ENCODE measurements at regions of chr1 and their contacts with region 1.

Region 1: GRCh38 chr1:61724813-61725694 is at the start of gene TM2D1:
- DNase-seq: peak; percentile 92
- ATAC-seq: peak; percentile 98
- H3K4me3 ChIP-seq: peak within 1 kb of the TSS; percentile 93
- H3K27ac ChIP-seq: peak within 1 kb of the TSS; percentile 59
- H3K4me1 ChIP-seq: peaks cover 18% of the 10 kb centered on the region
- H3K27me3 ChIP-seq: no peaks in the 10 kb centered on the region
- CTCF ChIP-seq: no peak
- total RNA-seq, gene TM2D1: 24.6 and 48.0 TPM in 2 replicates

Region 2: GRCh38 chr1:61141288-61142042 is 583.6 kb before region 1 on chr1:
- CTCF ChIA-PET with region 1: no interaction called
- POLR2A ChIA-PET with region 1: no interaction called
- intact Hi-C with region 1: no loop called
- DNase-seq: peak; percentile 68
- ATAC-seq: peak; percentile 51
- H3K4me3 ChIP-seq: peak overlapping the region; percentile 4; the same call in 1 of the 2 replicates
- H3K27ac ChIP-seq: peak overlapping the region; percentile 82
- H3K4me1 ChIP-seq: peaks cover 58% of the 10 kb centered on the region
- H3K27me3 ChIP-seq: no peaks in the 10 kb centered on the region
- CTCF ChIP-seq: no peak

Region 3: DNA sequence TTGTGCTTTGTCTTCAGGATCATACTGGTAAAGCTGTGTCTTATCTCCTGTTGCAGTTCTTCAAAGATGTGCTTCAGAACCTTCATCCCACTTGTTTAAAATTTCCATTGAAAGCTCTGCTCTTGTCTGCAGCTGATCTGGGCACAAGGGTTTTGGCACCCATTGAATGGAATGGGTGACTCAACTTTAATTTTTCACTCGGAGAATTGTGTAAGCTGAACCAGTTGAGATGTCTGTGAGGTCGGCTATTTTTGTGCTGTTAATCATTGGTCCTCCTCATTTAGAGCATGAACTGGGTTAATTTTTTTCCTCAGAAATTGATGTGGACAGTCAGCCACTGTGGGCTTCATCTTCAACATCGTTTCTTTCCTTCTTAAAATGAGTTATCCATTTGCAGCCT is 252.2 kb before region 1 on chr1:
- CTCF ChIA-PET with region 1: no interaction called
- POLR2A ChIA-PET with region 1: no interaction called
- intact Hi-C with region 1: no loop called
- DNase-seq: peak; percentile 39
- ATAC-seq: no peak
- H3K4me3 ChIP-seq: no peak overlapping the region
- H3K27ac ChIP-seq: no peak overlapping the region
- H3K4me1 ChIP-seq: no peaks in the 10 kb centered on the region
- H3K27me3 ChIP-seq: no peaks in the 10 kb centered on the region
- CTCF ChIP-seq: no peak

Region 4: DNA sequence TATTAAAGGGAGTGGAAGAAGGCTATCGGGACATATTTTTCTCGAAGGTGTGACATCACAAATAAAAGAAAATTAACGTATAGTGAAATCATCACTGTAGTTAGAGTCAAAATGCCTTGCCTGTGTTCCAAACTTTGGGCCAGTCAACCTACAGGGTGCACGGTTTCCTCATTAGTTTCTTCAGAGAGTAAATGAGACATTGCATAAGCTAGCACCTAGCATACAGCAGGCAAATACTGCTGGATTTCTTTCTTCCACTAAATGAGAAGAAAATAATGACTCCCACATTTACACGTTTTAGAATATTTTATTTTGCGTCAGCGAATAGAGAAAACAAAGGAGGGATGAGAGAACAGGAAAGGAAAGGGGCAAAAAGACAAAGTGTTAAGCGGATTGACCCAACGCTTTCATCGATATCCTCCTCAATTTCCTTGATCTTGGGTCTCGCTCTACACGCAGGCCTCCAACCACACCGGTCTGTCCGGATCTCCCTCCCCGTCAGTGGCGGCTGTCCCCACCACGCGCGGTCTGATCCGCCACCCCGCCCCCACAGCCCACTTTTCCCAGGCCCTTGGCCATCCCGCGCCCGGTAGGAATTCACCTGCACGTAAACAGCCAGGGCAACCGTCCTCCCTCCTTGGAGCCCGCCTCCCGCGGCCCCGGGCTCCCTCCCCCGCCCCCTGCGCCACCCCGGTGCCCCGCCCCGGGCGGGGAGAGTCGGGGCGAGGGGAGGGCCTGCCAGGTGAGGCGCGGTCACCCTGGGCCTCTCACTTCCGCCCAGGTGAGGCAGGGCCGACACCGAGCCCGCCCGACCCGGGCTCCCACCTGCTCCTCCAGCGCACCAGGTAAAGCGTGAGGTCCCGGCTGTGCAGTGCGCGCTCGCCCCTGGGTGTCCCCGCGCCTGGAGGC is 16.9 kb after region 1 on chr1 and contains the start of gene PATJ:
- CTCF ChIA-PET with region 1: no interaction called
- POLR2A ChIA-PET with region 1: no interaction called
- intact Hi-C with region 1: loop called (anchors 2 kb)
- DNase-seq: peak; percentile 90
- ATAC-seq: peak; percentile 75
- H3K4me3 ChIP-seq: peak within 1 kb of the TSS; percentile 90
- H3K27ac ChIP-seq: peak within 1 kb of the TSS; percentile 58
- H3K4me1 ChIP-seq: peaks cover 31% of the 10 kb centered on the region
- H3K27me3 ChIP-seq: no peaks in the 10 kb centered on the region
- CTCF ChIP-seq: no peak
- total RNA-seq, gene PATJ: 28.7 and 35.2 TPM in 2 replicates

Region 5: GRCh38 chr1:61754545-61754944 is 29.5 kb after region 1 on chr1:
- CTCF ChIA-PET with region 1: no interaction called
- POLR2A ChIA-PET with region 1: no interaction called
- intact Hi-C with region 1: loop called (anchors 1 kb)
- DNase-seq: peak; percentile 90
- ATAC-seq: peak; percentile 95
- H3K4me3 ChIP-seq: no peak overlapping the region
- H3K27ac ChIP-seq: peak overlapping the region; percentile 64
- H3K4me1 ChIP-seq: peaks cover 10% of the 10 kb centered on the region
- H3K27me3 ChIP-seq: no peaks in the 10 kb centered on the region
- CTCF ChIP-seq: no peak

Region 6: GRCh38 chr1:61842871-61843514 is 117.9 kb after region 1 on chr1:
- CTCF ChIA-PET with region 1: interaction called, 6 read pairs
- POLR2A ChIA-PET with region 1: no interaction called
- intact Hi-C with region 1: loop called (anchors 5 kb)
- DNase-seq: peak; percentile 48
- ATAC-seq: no peak
- H3K4me3 ChIP-seq: no peak overlapping the region
- H3K27ac ChIP-seq: no peak overlapping the region
- H3K4me1 ChIP-seq: peaks cover 23% of the 10 kb centered on the region
- H3K27me3 ChIP-seq: no peaks in the 10 kb centered on the region
- CTCF ChIP-seq: peak; percentile 56

Measured in PC-3 (cell line).